ENCODE measurements at regions of chr4 and their contacts with region 1.

Region 1: DNA sequence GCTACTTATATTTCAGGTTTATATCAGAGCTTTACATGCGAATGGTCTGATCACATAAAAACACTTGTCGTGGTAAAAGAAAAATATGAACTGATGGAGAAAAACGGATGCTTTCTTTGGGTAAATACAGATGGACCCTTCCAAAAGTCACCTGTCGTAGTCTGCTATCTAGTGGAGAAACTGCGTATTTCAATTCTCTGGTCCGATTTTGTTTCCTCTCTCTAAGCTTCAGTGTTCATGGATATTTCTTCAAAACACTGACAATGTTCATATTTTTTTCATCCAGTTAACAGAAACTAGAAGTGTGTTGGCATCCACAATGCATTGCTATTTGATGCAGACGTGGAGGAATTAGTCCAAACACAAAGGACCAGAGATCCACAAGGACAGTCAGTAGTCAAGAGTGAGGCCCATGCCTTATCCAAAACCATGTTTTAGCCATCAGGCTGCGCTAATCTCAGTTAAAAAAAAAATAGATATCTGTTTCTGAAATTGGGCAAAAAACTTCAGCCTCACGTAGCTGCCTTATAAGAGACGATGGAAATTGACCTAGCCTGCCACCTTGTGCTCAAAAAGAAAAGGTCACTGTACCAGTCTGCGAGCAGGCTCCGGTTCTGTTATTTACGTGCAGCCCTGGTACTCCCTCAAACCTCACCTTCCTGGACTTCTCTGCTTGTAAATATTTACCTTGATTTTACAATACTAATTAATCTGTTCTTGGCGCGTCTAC is 16.0 kb downstream of the MEPE start:
- DNase-seq: peak in 1 of 2 donors; percentile 56
- ATAC-seq: peak; percentile 85
- H3K4me3 ChIP-seq: peak overlapping the region; percentile 8 to 47
- H3K27ac ChIP-seq: no peak overlapping the region
- H3K4me1 ChIP-seq: peaks cover 0 to 1% of the 10 kb centered on the region in 2 donors
- H3K27me3 ChIP-seq: no peaks in the 10 kb centered on the region

Region 2: DNA sequence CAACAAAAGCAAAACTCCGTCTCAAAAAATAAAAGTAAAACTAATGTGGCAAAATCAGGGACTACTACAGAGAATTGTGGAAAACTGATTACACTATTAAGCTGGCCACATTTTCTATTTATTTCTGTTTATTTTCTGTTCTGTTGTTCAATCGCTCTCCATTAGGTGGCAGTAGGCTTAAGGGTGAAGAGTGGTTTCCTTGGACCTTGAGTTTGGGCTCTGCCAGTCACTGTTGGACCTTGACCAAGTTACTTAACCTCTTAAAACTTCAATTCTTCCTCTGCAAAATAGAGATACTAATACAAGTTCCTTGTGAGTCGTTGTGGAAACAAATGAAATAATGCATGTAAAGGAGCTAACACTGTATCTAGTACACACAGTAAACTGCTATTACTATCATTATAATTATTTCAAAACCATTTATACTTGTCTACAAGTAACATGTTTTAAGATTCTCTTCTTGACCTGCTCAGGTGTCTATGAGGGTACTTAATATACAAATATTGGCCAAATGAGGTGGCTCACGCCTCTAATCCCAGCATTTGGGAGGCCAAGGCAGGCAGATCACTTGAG is 473.0 kb before region 1 on chr4:
- intact Hi-C with region 1: loop called (anchors 5 to 10 kb)
- DNase-seq: no peak
- ATAC-seq: peak; percentile 88
- H3K4me3 ChIP-seq: no peak overlapping the region
- H3K27ac ChIP-seq: no peak overlapping the region
- H3K4me1 ChIP-seq: no peaks in the 10 kb centered on the region
- H3K27me3 ChIP-seq: no peaks in the 10 kb centered on the region

Region 3: DNA sequence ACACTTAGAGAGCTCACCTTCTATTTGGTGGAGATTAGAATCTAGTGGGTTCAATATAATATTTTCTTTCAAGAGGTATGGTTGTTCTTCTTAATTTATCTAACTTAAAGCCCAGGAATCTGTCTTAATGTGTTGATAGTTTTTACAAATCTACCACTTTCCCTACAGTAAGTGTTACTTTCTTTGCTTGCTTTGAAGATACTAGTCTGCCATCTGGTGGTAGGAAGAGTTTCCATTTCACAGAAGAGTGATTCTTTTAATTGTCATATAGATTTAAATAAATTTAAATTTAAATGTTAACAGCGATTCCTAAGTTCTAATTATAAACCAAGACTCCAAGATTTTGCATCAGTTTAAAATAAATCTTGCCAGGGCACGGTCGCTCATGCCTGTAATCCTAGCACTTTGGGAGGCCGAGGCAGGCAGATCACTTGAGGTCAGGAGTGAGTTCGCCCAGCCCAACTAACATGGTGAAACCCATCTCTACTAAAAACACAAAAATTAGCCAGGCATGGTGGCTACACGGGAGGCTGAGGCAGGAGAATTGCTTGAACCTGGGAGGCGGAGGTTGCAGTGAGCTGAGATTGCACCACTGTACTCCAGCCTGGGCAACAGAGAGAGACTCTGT is 382.9 kb before region 1 on chr4:
- intact Hi-C with region 1: loop called (anchors 10 kb)
- DNase-seq: no peak
- ATAC-seq: no peak
- H3K4me3 ChIP-seq: no peak overlapping the region
- H3K27ac ChIP-seq: no peak overlapping the region
- H3K4me1 ChIP-seq: no peaks in the 10 kb centered on the region
- H3K27me3 ChIP-seq: no peaks in the 10 kb centered on the region

Region 4: GRCh38 chr4:87679449-87680169 is 169.2 kb before region 1 on chr4:
- intact Hi-C with region 1: loop called in 1 of 2 experiments (anchors 2 kb)
- DNase-seq: peak; percentile 59 to 82
- ATAC-seq: no peak
- H3K4me3 ChIP-seq: no peak overlapping the region
- H3K27ac ChIP-seq: no peak overlapping the region
- H3K4me1 ChIP-seq: no peaks in the 10 kb centered on the region
- H3K27me3 ChIP-seq: no peaks in the 10 kb centered on the region

Region 5: DNA sequence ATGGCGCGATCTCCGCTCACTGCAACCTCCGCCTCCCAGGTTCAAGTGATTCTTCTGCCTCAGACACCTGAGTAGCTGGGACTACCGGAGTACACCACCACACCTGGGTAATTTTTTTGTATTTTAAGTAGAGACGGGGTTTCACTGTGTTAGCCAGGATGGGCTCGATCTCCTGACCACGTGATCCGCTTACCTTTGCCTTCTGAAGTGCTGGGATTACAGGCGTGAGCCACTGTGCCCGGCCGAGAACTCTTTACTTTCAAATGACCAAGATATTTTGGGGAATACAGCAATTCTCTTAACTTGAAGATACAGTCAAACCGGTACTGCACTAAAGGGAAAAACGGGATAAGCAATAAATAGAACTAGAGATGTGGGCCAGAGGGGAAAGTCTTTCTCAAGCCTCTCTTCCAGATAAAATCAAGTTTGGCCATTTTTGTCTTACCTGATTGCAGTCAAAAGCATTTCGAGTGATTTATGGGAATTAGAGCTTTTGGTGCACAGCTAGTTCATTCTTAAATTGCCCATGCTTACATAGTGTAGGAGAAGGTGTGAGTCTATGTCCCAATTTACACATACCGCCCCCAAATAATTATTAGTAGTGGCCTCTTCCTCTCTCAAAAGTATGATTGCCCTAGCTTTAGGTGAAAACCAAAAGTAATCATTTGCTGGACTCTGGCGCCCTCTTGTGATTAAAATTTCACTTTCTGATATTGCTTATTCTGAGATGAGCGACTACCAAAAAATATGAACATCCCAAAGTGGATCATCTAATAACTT is 362.9 kb after region 1 on chr4:
- intact Hi-C with region 1: loop called in 1 of 2 experiments (anchors 2 kb)
- DNase-seq: no peak
- ATAC-seq: peak; percentile 71
- H3K4me3 ChIP-seq: no peak overlapping the region
- H3K27ac ChIP-seq: no peak overlapping the region
- H3K4me1 ChIP-seq: no peaks in the 10 kb centered on the region
- H3K27me3 ChIP-seq: no peaks in the 10 kb centered on the region

Measured in aorta (tissue), 5 donors.